ENCODE measurements at regions of chr2 and their contacts with region 1.

Region 1: GRCh38 chr2:209423562-209424198 is at the start of gene MAP2:
- DNase-seq: peak; percentile 22 to 83 (median 48)
- ATAC-seq: peak; percentile 95
- H3K4me3 ChIP-seq: peak within 1 kb of the TSS; percentile 11
- H3K4me3 Mint-ChIP-seq: peak within 1 kb of the TSS; percentile 69 to 85 (median 80)
- H3K27ac ChIP-seq: no peak within 1 kb of the TSS
- H3K27ac Mint-ChIP-seq: peak within 1 kb of the TSS in 3 of 9 donors; percentile 4 to 30 (median 5)
- H3K4me1 ChIP-seq: no peaks in the 10 kb centered on the region
- H3K4me1 Mint-ChIP-seq: peaks cover 9 to 24% (median 19%) of the 10 kb centered on the region in 7 donors
- H3K27me3 ChIP-seq: no peaks in the 10 kb centered on the region
- H3K27me3 Mint-ChIP-seq: peaks cover 36 to 73% (median 43%) of the 10 kb centered on the region in 5 donors
- total RNA-seq, gene MAP2: 0.38 to 0.89 TPM in 2 of 5 experiments, not detected in the others

Region 2: GRCh38 chr2:208392300-208393080 is 1031.2 kb before region 1 on chr2:
- CTCF ChIA-PET with region 1: no interaction called
- POLR2A ChIA-PET with region 1: no interaction called
- intact Hi-C with region 1: loop called in 1 of 2 experiments (anchors 2 kb)
- DNase-seq: no peak
- ATAC-seq: no peak
- H3K4me3 ChIP-seq: no peak overlapping the region
- H3K4me3 Mint-ChIP-seq: no peak overlapping the region
- H3K27ac ChIP-seq: no peak overlapping the region
- H3K27ac Mint-ChIP-seq: no peak overlapping the region
- H3K4me1 ChIP-seq: no peaks in the 10 kb centered on the region
- H3K4me1 Mint-ChIP-seq: no peaks in the 10 kb centered on the region
- H3K27me3 ChIP-seq: no peaks in the 10 kb centered on the region
- H3K27me3 Mint-ChIP-seq: peaks cover 5 to 22% (median 11%) of the 10 kb centered on the region in 5 donors

Region 3: GRCh38 chr2:208984742-208985103 is 439.0 kb before region 1 on chr2:
- CTCF ChIA-PET with region 1: no interaction called
- POLR2A ChIA-PET with region 1: no interaction called
- intact Hi-C with region 1: no loop called
- DNase-seq: no peak
- ATAC-seq: no peak
- H3K4me3 ChIP-seq: no peak overlapping the region
- H3K4me3 Mint-ChIP-seq: no peak overlapping the region
- H3K27ac ChIP-seq: no peak overlapping the region
- H3K27ac Mint-ChIP-seq: no peak overlapping the region
- H3K4me1 ChIP-seq: no peaks in the 10 kb centered on the region
- H3K4me1 Mint-ChIP-seq: no peaks in the 10 kb centered on the region
- H3K27me3 ChIP-seq: no peaks in the 10 kb centered on the region
- H3K27me3 Mint-ChIP-seq: no peaks in the 10 kb centered on the region

Region 4: GRCh38 chr2:209556354-209556961 is 132.8 kb after region 1 on chr2:
- CTCF ChIA-PET with region 1: no interaction called
- POLR2A ChIA-PET with region 1: no interaction called
- intact Hi-C with region 1: loop called in 1 of 2 experiments (anchors 10 kb)
- DNase-seq: no peak
- ATAC-seq: no peak
- H3K4me3 ChIP-seq: no peak overlapping the region
- H3K4me3 Mint-ChIP-seq: no peak overlapping the region
- H3K27ac ChIP-seq: no peak overlapping the region
- H3K27ac Mint-ChIP-seq: no peak overlapping the region
- H3K4me1 ChIP-seq: no peaks in the 10 kb centered on the region
- H3K4me1 Mint-ChIP-seq: no peaks in the 10 kb centered on the region
- H3K27me3 ChIP-seq: no peaks in the 10 kb centered on the region
- H3K27me3 Mint-ChIP-seq: no peaks in the 10 kb centered on the region

Region 5: DNA sequence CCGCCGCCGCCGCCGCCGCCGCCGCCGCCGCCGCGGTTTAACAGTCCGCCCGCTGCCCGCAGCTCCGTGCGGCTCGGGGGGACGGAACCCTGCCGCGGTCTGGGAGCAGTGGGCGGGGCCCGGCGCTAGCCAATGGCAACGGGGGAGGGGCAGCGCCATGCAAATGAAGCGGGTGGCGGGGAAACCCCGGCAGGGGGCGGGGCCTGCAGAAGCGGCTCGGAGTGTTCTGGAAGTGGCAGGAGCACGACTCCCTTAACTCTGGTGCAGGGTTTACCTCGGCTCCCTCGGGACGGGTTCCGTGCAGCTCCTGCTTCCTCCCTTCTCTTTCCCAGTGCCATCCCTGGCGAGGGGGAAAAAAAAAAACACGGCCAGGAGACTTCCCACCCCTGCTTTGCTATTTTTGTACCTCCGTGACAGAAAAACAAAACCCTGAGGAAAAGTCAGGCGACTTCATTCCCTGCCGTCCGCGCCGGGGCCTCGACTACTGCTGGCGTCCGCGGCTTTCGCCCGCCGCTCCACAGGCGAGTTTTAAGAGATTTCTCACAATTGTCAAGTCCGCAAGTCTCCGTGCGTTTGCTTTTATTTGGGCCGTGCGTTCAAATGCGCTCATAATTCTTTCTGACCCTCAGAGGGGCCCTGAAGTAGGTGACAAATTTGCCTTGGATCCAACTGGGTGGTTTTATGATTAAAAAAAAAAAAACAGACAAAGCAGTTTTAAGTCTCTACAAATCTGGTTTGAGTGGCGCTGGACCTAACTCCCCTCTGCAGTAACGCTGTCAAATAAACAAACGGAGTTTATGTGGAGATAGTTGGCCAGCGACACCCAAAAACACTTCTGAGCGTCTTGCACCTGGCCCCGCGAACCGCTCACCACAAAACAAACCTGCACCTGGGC is 747.9 kb after region 1 on chr2 and contains the start of gene KANSL1L:
- CTCF ChIA-PET with region 1: no interaction called
- POLR2A ChIA-PET with region 1: no interaction called
- intact Hi-C with region 1: loop called (anchors 10 kb)
- DNase-seq: peak; percentile 92 to 99 (median 94)
- ATAC-seq: peak; percentile 95
- H3K4me3 ChIP-seq: peak within 1 kb of the TSS; percentile 89
- H3K4me3 Mint-ChIP-seq: peak within 1 kb of the TSS; percentile 90 to 100 (median 98)
- H3K27ac ChIP-seq: peak within 1 kb of the TSS; percentile 93
- H3K27ac Mint-ChIP-seq: peak within 1 kb of the TSS; percentile 93 to 99 (median 96)
- H3K4me1 ChIP-seq: peaks cover 6 to 7% of the 10 kb centered on the region in 2 donors
- H3K4me1 Mint-ChIP-seq: peaks cover 17 to 42% (median 33%) of the 10 kb centered on the region in 7 donors
- H3K27me3 ChIP-seq: no peaks in the 10 kb centered on the region
- H3K27me3 Mint-ChIP-seq: peaks cover 0 to 41% (median 0%) of the 10 kb centered on the region in 5 donors
- total RNA-seq, gene KANSL1L: 6.3 to 23.3 (median 13.3) TPM